Transverse colon (tissue), 4 donors: ENCODE measurements at regions of chr21 and their contacts with region 1.

Region 1: DNA sequence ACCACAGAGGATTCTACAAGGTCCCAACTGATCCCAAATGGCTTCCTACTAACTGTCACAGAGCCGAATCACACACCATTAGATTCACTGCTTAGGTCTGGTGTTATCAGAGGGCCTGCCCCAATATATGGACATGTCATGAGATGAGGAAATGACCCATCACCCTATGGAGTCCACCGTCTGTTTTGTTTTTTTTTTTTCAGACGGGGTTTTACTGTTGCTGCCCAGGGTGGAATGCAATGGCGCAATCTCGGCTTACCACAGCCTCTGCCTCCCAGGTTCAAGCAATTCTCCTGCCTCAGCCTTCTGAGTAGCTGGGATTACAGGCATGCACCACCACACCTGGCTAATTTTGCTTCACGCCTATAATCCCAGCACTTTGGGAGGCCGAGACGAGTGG is 83.8 kb upstream of the ETS2 start:
- DNase-seq: no peak
- H3K4me3 ChIP-seq: no peak overlapping the region
- H3K27ac ChIP-seq: no peak overlapping the region
- H3K4me1 ChIP-seq: no peaks in the 10 kb centered on the region
- H3K27me3 ChIP-seq: no peaks in the 10 kb centered on the region
- CTCF ChIP-seq: no peak
- EP300 ChIP-seq: no peak
- POLR2A ChIP-seq: no peak

Region 2: GRCh38 chr21:38511662-38512243 is 210.2 kb before region 1 on chr21:
- in situ Hi-C with region 1: loop called (anchors 10 to 25 kb)
- intact Hi-C with region 1: no loop called
- DNase-seq: no peak
- H3K4me3 ChIP-seq: no peak overlapping the region
- H3K27ac ChIP-seq: no peak overlapping the region
- H3K4me1 ChIP-seq: peaks cover 0 to 13% (median 9%) of the 10 kb centered on the region in 4 donors
- H3K27me3 ChIP-seq: no peaks in the 10 kb centered on the region
- CTCF ChIP-seq: peak in 1 of 5 experiments; percentile 13
- EP300 ChIP-seq: no peak
- POLR2A ChIP-seq: no peak

Region 3: DNA sequence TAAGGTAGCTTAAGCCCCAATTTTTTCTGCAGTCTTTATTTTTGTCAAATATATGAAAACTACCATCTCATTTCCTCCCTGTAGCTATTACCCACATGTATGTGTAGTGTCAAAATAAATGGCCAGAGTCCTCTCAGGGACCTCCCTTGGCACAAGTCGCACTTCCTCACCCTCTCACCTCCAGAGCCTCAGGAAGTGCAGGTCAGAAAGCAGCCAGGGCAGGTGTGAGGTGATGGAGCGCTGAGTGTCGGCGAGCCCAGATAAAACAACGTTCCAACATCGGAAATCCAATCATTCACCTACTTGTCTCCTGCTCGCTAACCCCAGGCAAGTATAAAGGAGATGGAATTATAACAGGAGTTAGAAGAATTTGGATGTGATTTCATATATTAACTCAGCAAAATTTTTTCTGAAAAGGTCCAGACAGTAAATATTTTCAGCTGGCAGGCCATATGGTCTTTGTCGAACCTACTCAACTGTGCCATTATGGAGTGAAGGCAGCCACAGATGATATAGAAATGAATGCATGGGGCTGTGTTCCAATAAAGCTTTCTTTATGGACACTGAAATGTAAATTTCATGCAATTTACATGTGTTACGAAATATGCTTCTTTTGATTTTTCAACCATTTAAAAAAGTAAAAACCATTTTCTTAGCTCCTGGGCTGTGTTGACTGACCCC is 146.9 kb before region 1 on chr21:
- in situ Hi-C with region 1: no loop called
- intact Hi-C with region 1: no loop called
- DNase-seq: no peak
- H3K4me3 ChIP-seq: no peak overlapping the region
- H3K27ac ChIP-seq: no peak overlapping the region
- H3K4me1 ChIP-seq: no peaks in the 10 kb centered on the region
- H3K27me3 ChIP-seq: peaks cover 6% of the 10 kb centered on the region
- CTCF ChIP-seq: no peak
- EP300 ChIP-seq: no peak
- POLR2A ChIP-seq: no peak

Region 4: GRCh38 chr21:40067751-40068150 is 1345.8 kb after region 1 on chr21:
- in situ Hi-C with region 1: no loop called
- intact Hi-C with region 1: no loop called
- DNase-seq: no peak
- H3K4me3 ChIP-seq: no peak overlapping the region
- H3K27ac ChIP-seq: no peak overlapping the region
- H3K4me1 ChIP-seq: no peaks in the 10 kb centered on the region
- H3K27me3 ChIP-seq: no peaks in the 10 kb centered on the region
- CTCF ChIP-seq: no peak
- EP300 ChIP-seq: no peak
- POLR2A ChIP-seq: no peak